Dendritic cell treated with granulocyte-macrophage colony-stimulating factor and Interleukin-4, amounts not matched to agents 40 ng/mL and 50 ng/mL, for 4 days (primary cell): ENCODE measurements at regions of chr6 and their contacts with region 1.

Region 1: GRCh38 chr6:144582939-144583613 is 297.9 kb downstream of the UTRN start:
- H3K4me3 Mint-ChIP-seq: peak overlapping the region; percentile 67
- H3K27ac Mint-ChIP-seq: peak overlapping the region; percentile 77
- H3K4me1 Mint-ChIP-seq: peaks cover 16% of the 10 kb centered on the region
- H3K27me3 Mint-ChIP-seq: no peaks in the 10 kb centered on the region

Region 2: DNA sequence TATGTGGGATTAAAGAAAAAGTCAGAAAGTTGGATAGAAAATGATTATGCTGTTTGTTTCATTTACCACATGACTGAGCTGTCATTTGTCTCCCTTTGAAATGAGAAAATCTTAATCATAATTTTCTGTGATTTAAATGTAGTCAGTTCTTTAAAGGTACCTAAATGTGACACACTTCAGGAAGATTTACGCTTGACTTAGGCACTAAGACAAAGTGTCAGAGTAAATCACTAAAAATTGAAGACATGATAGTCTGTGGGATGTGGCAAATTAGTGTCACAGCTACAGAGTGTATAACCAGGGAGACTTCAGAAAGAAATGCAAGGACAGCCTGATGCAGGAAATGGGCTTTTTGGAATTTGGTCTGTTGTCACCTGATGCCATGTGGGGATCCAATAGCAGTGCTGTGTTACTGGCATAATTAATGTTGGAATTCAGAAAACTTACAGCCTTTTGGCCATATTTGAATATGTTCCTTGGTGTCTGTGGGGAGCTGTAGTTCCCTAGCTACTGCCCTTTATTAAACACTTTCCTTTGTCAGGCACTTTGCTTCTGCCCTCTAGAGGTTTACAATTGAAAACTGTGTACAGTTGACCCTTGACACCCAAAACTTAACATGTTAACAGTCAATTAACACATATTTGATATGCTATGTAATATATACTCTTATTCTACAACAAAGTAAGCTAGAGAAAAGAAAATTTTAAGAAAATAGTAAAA is 195.9 kb after region 1 on chr6:
- intact Hi-C with region 1: loop called (anchors 5 kb)
- H3K4me3 Mint-ChIP-seq: no peak overlapping the region
- H3K27ac Mint-ChIP-seq: no peak overlapping the region
- H3K4me1 Mint-ChIP-seq: peaks cover 21% of the 10 kb centered on the region
- H3K27me3 Mint-ChIP-seq: no peaks in the 10 kb centered on the region

Region 3: DNA sequence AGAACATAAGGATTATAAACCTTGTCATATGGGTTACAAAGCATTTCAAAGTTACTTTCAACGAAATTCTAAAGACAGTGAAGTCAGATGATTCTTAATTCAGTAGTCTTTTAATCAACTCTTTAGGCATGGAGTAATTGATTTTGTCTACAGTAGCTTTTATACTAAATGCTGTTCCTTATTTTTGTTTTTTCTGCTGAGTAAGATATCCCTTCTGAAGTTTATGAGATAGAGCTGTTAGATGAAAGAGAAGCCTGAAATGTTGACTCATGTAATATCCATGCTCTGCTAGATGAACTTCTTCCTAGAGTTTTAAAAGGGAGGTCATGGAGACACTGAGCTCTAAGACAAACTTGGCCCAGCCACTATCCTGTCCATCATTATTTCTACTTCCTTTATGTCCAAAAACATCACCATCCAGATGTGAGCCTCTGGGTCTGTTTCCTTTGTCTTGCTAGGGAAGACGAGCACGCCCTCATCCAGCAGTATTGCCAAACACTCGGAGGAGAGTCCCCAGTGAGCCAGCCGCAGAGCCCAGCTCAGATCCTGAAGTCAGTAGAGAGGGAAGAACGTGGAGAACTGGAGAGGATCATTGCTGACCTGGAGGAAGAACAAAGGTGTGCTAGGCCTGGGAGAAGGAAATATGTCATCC is 252.4 kb after region 1 on chr6:
- intact Hi-C with region 1: loop called (anchors 10 kb)
- H3K4me3 Mint-ChIP-seq: no peak overlapping the region
- H3K27ac Mint-ChIP-seq: no peak overlapping the region
- H3K4me1 Mint-ChIP-seq: no peaks in the 10 kb centered on the region
- H3K27me3 Mint-ChIP-seq: no peaks in the 10 kb centered on the region

Region 4: DNA sequence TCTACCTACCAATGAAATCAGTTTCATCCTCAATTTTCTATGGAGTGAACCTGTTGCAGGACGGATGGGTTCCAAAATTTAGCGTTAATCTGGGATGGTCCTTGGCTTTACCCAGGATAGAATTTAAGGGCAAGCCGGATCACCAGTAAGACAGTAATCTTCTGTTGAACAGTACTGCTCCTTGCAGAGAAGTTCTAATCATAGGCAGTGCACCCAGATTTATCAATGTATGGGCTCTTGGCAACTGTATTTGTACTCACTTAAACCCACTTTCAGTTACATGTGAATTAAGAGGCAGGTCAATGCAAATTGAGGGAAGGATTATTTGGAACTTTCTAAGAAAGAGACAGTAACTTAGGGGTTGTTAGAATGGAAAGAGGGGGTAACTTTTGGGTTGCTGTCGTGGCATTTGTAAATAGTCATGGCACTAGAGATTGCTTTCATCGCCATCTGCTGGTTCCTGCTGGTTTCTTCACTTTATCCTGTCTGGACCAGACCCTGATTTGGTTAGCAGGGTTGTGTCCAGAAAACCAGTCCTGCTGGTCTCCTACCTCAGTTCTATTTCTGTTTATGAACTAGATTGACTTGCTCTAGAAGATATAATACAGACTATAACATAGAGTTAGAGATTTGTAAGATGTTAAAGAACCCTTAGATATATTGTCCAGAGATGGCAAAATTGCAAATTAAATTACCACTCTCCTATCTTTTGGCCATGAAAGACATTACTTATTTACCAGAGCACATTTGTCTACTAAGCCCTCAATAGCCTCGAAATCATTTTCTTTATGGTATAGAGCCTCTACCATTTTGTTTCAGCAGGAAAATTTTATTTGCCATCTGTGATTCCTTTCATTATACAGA is 348.3 kb after region 1 on chr6:
- intact Hi-C with region 1: loop called (anchors 1 kb)
- H3K4me3 Mint-ChIP-seq: no peak overlapping the region
- H3K27ac Mint-ChIP-seq: no peak overlapping the region
- H3K4me1 Mint-ChIP-seq: no peaks in the 10 kb centered on the region
- H3K27me3 Mint-ChIP-seq: no peaks in the 10 kb centered on the region

Region 5: GRCh38 chr6:145028144-145028818 is 445.2 kb after region 1 on chr6:
- intact Hi-C with region 1: loop called (anchors 5 kb)
- H3K4me3 Mint-ChIP-seq: no peak overlapping the region
- H3K27ac Mint-ChIP-seq: no peak overlapping the region
- H3K4me1 Mint-ChIP-seq: no peaks in the 10 kb centered on the region
- H3K27me3 Mint-ChIP-seq: no peaks in the 10 kb centered on the region

Region 6: DNA sequence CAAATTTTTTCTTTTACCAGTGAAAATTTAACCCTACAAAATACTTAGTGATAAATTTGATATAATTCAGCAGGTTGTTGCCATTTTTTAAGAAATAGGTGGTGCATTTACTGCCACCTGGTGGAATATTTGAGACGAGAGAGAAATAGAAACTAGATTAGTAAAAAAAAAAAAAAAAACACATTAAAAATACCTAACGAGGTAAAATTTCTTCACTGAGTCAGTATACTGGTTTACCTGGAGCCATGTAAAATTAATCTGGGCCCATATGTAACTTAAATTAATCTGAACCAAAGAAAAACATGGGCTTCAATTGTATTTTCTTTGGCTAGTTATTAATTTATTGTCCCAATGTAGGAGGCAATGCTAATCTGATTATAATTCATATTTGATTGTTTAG is 631.5 kb after region 1 on chr6:
- intact Hi-C with region 1: loop called (anchors 2 kb)
- H3K4me3 Mint-ChIP-seq: no peak overlapping the region
- H3K27ac Mint-ChIP-seq: no peak overlapping the region
- H3K4me1 Mint-ChIP-seq: no peaks in the 10 kb centered on the region
- H3K27me3 Mint-ChIP-seq: no peaks in the 10 kb centered on the region

Region 7: GRCh38 chr6:145633981-145634627 is 1051.0 kb after region 1 on chr6:
- intact Hi-C with region 1: loop called (anchors 5 kb)
- H3K4me3 Mint-ChIP-seq: no peak overlapping the region
- H3K27ac Mint-ChIP-seq: no peak overlapping the region
- H3K4me1 Mint-ChIP-seq: peaks cover 7% of the 10 kb centered on the region
- H3K27me3 Mint-ChIP-seq: no peaks in the 10 kb centered on the region